Heart left ventricle (tissue), 16 donors: ENCODE measurements at regions of chr11 and their contacts with region 1.

Region 1: DNA sequence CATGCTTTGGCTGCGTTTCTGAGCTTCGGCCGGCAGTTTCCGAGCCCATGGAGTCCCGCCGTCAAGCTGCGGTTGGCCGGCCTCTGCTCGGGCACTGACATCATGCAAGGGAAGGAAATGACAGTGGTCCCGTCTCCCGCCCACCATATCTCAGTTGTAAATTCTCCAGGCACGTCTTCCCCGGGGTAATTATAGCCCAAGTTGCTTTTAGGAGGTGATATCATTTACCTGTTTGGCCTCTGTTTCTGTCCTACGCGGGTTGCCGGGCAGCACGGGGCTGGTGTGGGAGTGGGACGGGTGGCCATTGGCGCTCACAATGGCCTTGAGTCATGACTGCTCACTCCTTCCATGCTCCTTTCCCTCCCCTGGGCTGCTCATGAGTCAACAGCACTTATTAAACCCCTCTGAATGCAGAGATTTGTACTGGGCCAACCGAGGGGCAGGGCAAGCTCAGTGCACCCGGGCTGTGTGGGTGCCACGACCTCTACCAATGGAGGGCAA is 4.2 kb upstream of the ANO1 start:
- DNase-seq: peak in 3 of 5 donors; percentile 61 to 74 (median 74)
- ATAC-seq: peak in 3 of 4 donors; percentile 76 to 86 (median 83)
- H3K4me3 ChIP-seq: no peak overlapping the region
- H3K27ac ChIP-seq: peak overlapping the region in 6 of 12 donors; percentile 37 to 80 (median 72)
- H3K4me1 ChIP-seq: peaks cover 0 to 40% (median 17%) of the 10 kb centered on the region in 12 donors
- H3K27me3 ChIP-seq: peaks cover 0 to 43% (median 7%) of the 10 kb centered on the region in 9 donors
- CTCF ChIP-seq: no peak
- POLR2A ChIP-seq: no peak

Region 2: GRCh38 chr11:69775163-69775755 is 298.7 kb before region 1 on chr11 and contains the start of gene FGF4:
- intact Hi-C with region 1: no loop called
- DNase-seq: no peak
- ATAC-seq: no peak
- H3K4me3 ChIP-seq: peak within 1 kb of the TSS in 1 of 12 donors; percentile 13
- H3K27ac ChIP-seq: no peak within 1 kb of the TSS
- H3K4me1 ChIP-seq: peaks cover 0 to 18% (median 0%) of the 10 kb centered on the region in 12 donors
- H3K27me3 ChIP-seq: peaks cover 18 to 83% (median 41%) of the 10 kb centered on the region in 9 donors
- CTCF ChIP-seq: no peak
- POLR2A ChIP-seq: no peak
- total RNA-seq, gene FGF4: not detected

Region 3: GRCh38 chr11:69943066-69943465 is 130.9 kb before region 1 on chr11:
- intact Hi-C with region 1: loop called in 3 of 10 experiments (anchors 5 to 10 kb)
- DNase-seq: peak in 1 of 5 donors; percentile 18
- ATAC-seq: peak in 1 of 4 donors; percentile 3
- H3K4me3 ChIP-seq: no peak overlapping the region
- H3K27ac ChIP-seq: peak overlapping the region in 11 of 12 donors; percentile 4 to 94 (median 59)
- H3K4me1 ChIP-seq: peaks cover 0 to 26% (median 12%) of the 10 kb centered on the region in 12 donors
- H3K27me3 ChIP-seq: no peaks in the 10 kb centered on the region
- CTCF ChIP-seq: peak in 3 of 12 donors; percentile 17 to 25 (median 21)
- POLR2A ChIP-seq: no peak

Region 4: GRCh38 chr11:69985641-69986439 is 88.1 kb before region 1 on chr11:
- intact Hi-C with region 1: loop called in 1 of 10 experiments (anchors 10 kb)
- DNase-seq: peak in 3 of 5 donors; percentile 27 to 68 (median 43)
- ATAC-seq: peak in 3 of 4 donors; percentile 10 to 32 (median 23)
- H3K4me3 ChIP-seq: peak overlapping the region; percentile 23 to 64 (median 46)
- H3K27ac ChIP-seq: peak overlapping the region in 10 of 12 donors; percentile 46 to 81 (median 65)
- H3K4me1 ChIP-seq: peaks cover 0 to 33% (median 14%) of the 10 kb centered on the region in 12 donors
- H3K27me3 ChIP-seq: peaks cover 9 to 59% (median 27%) of the 10 kb centered on the region in 9 donors
- CTCF ChIP-seq: no peak
- POLR2A ChIP-seq: no peak

Region 5: GRCh38 chr11:70135625-70136059 is 61.7 kb after region 1 on chr11:
- intact Hi-C with region 1: loop called in 1 of 10 experiments (anchors 10 kb)
- DNase-seq: peak in 1 of 5 donors; percentile 47
- ATAC-seq: peak in 3 of 4 donors; percentile 28 to 79 (median 65)
- H3K4me3 ChIP-seq: peak overlapping the region in 6 of 12 donors; percentile 4 to 39 (median 22)
- H3K27ac ChIP-seq: peak overlapping the region in 6 of 12 donors; percentile 4 to 67 (median 36)
- H3K4me1 ChIP-seq: peaks cover 0 to 21% (median 4%) of the 10 kb centered on the region in 12 donors
- H3K27me3 ChIP-seq: no peaks in the 10 kb centered on the region
- CTCF ChIP-seq: no peak
- POLR2A ChIP-seq: no peak